Activated CD4-positive, alpha-beta T cell treated with anti-CD3 and anti-CD28 coated beads for 36 hours (primary cell): ENCODE measurements at regions of chr6 and their contacts with region 1.

Region 1: GRCh38 chr6:25942561-25943147 is 12.2 kb upstream of the SLC17A2 start:
- DNase-seq: no peak
- ATAC-seq: peak; percentile 70
- H3K4me3 Mint-ChIP-seq: no peak overlapping the region
- H3K27ac Mint-ChIP-seq: no peak overlapping the region
- H3K4me1 Mint-ChIP-seq: peaks cover 22% of the 10 kb centered on the region
- H3K27me3 Mint-ChIP-seq: peaks cover 4% of the 10 kb centered on the region

Region 2: GRCh38 chr6:25556516-25556915 is 386.1 kb before region 1 on chr6:
- CTCF ChIA-PET with region 1: no interaction called
- POLR2A ChIA-PET with region 1: no interaction called
- intact Hi-C with region 1: loop called in 1 of 2 experiments (anchors 1 kb)
- DNase-seq: peak; percentile 90
- ATAC-seq: peak; percentile 66
- H3K4me3 Mint-ChIP-seq: no peak overlapping the region
- H3K27ac Mint-ChIP-seq: no peak overlapping the region
- H3K4me1 Mint-ChIP-seq: peaks cover 2% of the 10 kb centered on the region
- H3K27me3 Mint-ChIP-seq: no peaks in the 10 kb centered on the region

Region 3: GRCh38 chr6:25670793-25671513 is 271.7 kb before region 1 on chr6:
- CTCF ChIA-PET with region 1: no interaction called
- POLR2A ChIA-PET with region 1: no interaction called
- intact Hi-C with region 1: no loop called
- DNase-seq: no peak
- ATAC-seq: no peak
- H3K4me3 Mint-ChIP-seq: no peak overlapping the region
- H3K27ac Mint-ChIP-seq: no peak overlapping the region
- H3K4me1 Mint-ChIP-seq: no peaks in the 10 kb centered on the region
- H3K27me3 Mint-ChIP-seq: peaks cover 8% of the 10 kb centered on the region

Region 4: DNA sequence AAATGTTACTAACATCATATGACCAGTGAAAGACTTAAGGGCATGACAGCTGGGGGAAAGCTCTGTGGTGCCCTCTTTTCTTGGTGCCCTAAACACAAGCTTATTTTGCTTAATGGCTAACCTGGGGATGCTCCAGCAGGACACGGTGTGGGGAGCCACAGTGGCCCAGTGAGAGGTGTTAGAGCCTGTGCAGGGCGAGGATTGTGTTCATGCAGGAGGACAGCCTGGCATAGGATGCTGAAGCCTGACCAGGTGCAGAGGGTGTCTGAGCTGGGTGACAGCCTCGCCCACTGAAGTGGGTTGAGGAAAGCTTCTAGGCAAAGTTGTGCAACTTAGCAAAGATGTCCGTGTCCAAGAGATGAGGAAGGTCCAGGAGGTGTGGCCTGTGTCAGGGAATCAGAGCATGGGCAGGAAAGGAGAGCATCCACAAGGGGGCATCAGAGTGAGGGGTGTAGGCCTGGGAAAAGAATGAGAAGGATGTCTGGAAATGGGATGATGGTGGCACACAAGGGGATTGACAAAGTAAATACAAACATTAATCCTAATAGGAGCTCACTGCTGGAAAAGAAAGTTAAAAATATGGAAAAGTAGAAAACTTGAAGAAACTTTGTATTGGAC is 154.2 kb before region 1 on chr6:
- CTCF ChIA-PET with region 1: interaction called, 7 read pairs
- POLR2A ChIA-PET with region 1: no interaction called
- intact Hi-C with region 1: loop called (anchors 1 to 5 kb)
- DNase-seq: peak; percentile 60
- ATAC-seq: peak; percentile 55
- H3K4me3 Mint-ChIP-seq: no peak overlapping the region
- H3K27ac Mint-ChIP-seq: no peak overlapping the region
- H3K4me1 Mint-ChIP-seq: peaks cover 3% of the 10 kb centered on the region
- H3K27me3 Mint-ChIP-seq: peaks cover 8% of the 10 kb centered on the region

Region 5: DNA sequence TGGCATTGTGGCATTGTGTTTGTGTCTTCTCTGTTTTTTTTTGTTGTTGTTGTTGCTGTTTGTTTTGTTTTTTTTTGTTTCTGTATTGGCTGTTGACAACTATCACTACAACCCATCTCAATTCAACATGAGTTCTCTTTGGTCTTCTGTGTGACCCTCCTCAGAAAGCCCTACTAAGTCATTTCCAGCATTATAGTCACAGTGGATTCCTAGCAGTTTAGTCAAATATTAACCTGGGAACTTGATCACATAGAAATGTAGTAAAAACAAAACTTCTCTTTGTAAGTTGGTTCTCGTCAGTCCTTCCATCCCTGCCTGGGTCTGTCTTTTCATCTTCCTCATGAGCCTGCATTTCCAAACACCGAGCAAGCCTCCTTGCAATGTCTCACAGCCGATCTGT is 28.9 kb before region 1 on chr6:
- CTCF ChIA-PET with region 1: no interaction called
- POLR2A ChIA-PET with region 1: no interaction called
- intact Hi-C with region 1: loop called (anchors 1 kb)
- DNase-seq: peak; percentile 44
- ATAC-seq: peak; percentile 67
- H3K4me3 Mint-ChIP-seq: no peak overlapping the region
- H3K27ac Mint-ChIP-seq: peak overlapping the region; percentile 75
- H3K4me1 Mint-ChIP-seq: peaks cover 63% of the 10 kb centered on the region
- H3K27me3 Mint-ChIP-seq: no peaks in the 10 kb centered on the region